ENCODE measurements at regions of chr3 and their contacts with region 1.

Region 1: GRCh38 chr3:27960133-27960532 is 238.0 kb upstream of the EOMES start:
- DNase-seq: no peak
- ATAC-seq: no peak
- H3K4me3 ChIP-seq: no peak overlapping the region
- H3K27ac ChIP-seq: no peak overlapping the region
- H3K4me1 ChIP-seq: no peaks in the 10 kb centered on the region
- H3K27me3 ChIP-seq: no peaks in the 10 kb centered on the region
- CTCF ChIP-seq: no peak

Region 2: GRCh38 chr3:27927882-27928281 is 32.3 kb before region 1 on chr3:
- intact Hi-C with region 1: loop called in 1 of 2 experiments (anchors 2 kb)
- DNase-seq: no peak
- ATAC-seq: no peak
- H3K4me3 ChIP-seq: no peak overlapping the region
- H3K27ac ChIP-seq: no peak overlapping the region
- H3K4me1 ChIP-seq: no peaks in the 10 kb centered on the region
- H3K27me3 ChIP-seq: no peaks in the 10 kb centered on the region
- CTCF ChIP-seq: no peak

Measured in psoas muscle (tissue), 8 donors.